Activated CD8-positive, alpha-beta T cell treated with anti-CD3 and anti-CD28 coated beads for 36 hours (primary cell): ENCODE measurements at regions of chr16 and their contacts with region 1.

Region 1: GRCh38 chr16:85253084-85253941 is 141.0 kb upstream of the CIBAR2 start:
- DNase-seq: peak; percentile 72
- ATAC-seq: peak; percentile 88
- H3K4me3 Mint-ChIP-seq: no peak overlapping the region
- H3K27ac Mint-ChIP-seq: no peak overlapping the region
- H3K4me1 Mint-ChIP-seq: peaks cover 10% of the 10 kb centered on the region
- H3K27me3 Mint-ChIP-seq: peaks cover 4% of the 10 kb centered on the region
- CTCF ChIP-seq: peak; percentile 98

Region 2: DNA sequence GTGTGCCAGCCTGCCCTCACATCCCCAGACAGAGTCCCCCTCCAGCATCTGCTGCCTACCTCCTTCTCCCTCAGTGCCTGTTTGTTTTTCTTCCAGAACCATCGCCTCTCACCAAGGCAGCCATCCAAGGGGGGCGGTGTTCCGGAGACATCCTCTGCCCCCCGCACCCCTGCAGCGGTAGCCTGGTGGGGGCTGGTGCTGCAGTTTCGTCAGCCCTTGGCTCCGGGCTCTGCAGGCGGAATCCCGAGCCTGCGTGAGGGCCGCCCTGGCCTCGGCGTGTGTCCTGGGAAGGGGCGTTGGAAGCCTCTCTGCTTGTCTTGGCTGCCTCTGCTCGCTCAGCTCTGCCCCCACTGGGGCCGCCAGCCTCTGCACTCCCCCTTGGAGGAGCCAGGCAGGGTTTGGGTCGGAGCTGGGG is 15.1 kb before region 1 on chr16:
- CTCF ChIA-PET with region 1: interaction called, 23 read pairs
- POLR2A ChIA-PET with region 1: no interaction called
- intact Hi-C with region 1: no loop called
- DNase-seq: no peak
- ATAC-seq: no peak
- H3K4me3 Mint-ChIP-seq: no peak overlapping the region
- H3K27ac Mint-ChIP-seq: no peak overlapping the region
- H3K4me1 Mint-ChIP-seq: peaks cover 4% of the 10 kb centered on the region
- H3K27me3 Mint-ChIP-seq: peaks cover 14% of the 10 kb centered on the region
- CTCF ChIP-seq: no peak

Region 3: DNA sequence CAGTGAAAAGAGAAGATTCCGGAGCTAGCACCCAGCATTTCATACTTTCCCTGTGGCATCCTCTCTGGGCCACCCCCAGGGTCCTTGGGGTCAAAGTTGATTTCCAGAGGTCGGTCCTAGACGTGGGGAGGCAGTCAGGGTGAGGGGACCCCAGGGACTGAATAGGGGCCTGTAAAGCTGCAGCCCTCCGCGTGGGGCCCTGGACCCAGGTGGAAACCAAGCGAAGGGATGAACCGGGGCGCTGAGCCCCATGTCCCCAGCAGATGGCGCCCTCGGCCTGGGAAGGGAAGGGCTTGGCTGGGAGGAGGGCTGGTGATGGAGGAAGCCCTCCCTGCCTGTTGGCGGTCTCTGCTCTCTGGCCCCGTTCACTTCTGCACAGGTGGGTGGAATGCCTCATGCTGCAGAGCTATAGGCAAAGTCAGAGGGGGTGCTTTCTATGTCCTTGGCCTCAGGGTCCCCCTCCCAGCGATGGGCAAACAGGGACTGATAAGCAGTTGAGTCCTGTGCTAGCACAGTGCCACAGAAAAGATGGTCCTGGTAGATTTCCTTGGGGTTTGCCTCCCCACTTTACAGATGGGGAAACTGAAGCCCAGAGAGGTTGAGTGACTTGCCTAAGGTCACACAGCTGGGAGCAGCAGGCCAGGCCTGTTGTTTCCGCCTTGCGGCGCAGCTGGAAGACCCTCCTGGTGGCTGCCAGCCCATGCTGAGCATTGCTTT is 22.4 kb after region 1 on chr16:
- CTCF ChIA-PET with region 1: interaction called, 12 read pairs
- POLR2A ChIA-PET with region 1: no interaction called
- intact Hi-C with region 1: no loop called
- DNase-seq: peak; percentile 79
- ATAC-seq: peak; percentile 98
- H3K4me3 Mint-ChIP-seq: no peak overlapping the region
- H3K27ac Mint-ChIP-seq: no peak overlapping the region
- H3K4me1 Mint-ChIP-seq: no peaks in the 10 kb centered on the region
- H3K27me3 Mint-ChIP-seq: peaks cover 3% of the 10 kb centered on the region
- CTCF ChIP-seq: peak; percentile 80